PC-9 (cell line): ENCODE measurements at regions of chr13 and their contacts with region 1.

Region 1: DNA sequence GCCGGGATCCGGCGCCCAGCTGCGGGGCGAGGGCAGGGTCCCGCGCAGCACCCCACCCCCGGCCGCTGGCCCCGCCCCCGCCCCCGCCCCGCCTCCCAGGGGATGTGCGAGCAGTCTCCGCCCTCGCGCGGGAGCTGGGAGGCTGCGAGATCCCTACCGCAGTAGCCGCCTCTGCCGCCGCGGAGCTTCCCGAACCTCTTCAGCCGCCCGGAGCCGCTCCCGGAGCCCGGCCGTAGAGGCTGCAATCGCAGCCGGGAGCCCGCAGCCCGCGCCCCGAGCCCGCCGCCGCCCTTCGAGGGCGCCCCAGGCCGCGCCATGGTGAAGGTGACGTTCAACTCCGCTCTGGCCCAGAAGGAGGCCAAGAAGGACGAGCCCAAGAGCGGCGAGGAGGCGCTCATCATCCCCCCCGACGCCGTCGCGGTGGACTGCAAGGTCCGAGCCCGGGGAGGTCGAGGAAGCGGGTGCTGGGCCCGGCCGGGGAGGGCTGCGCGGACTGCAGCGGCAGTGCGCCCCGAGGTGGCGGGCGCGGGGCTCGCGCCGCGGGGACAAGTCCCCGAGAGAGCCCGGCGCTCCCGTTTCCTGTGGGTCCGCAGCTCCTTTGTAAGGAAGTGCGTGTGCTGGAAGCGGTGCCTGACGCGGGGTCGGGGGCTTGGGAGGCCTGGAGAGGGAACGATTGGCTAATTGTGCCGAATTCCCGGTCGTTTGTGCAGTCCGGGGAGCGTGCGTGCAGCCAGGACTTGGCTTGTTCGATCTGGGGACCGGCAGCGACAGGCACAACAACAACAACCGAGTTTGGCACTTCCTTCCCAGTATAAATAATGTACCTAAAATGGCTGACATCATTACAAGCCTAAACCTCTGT is at the start of gene ITM2B:
- DNase-seq: peak; percentile 51 to 71
- H3K4me3 ChIP-seq: peak within 1 kb of the TSS; percentile 67
- H3K27ac ChIP-seq: peak within 1 kb of the TSS; percentile 43; the same call in 1 of the 2 replicates
- H3K4me1 ChIP-seq: peaks cover 28% of the 10 kb centered on the region
- H3K27me3 ChIP-seq: no peaks in the 10 kb centered on the region
- CTCF ChIP-seq: no peak; the same call in 1 of the 2 replicates
- total RNA-seq, gene ITM2B: 136 and 155 TPM in 2 replicates

Region 2: DNA sequence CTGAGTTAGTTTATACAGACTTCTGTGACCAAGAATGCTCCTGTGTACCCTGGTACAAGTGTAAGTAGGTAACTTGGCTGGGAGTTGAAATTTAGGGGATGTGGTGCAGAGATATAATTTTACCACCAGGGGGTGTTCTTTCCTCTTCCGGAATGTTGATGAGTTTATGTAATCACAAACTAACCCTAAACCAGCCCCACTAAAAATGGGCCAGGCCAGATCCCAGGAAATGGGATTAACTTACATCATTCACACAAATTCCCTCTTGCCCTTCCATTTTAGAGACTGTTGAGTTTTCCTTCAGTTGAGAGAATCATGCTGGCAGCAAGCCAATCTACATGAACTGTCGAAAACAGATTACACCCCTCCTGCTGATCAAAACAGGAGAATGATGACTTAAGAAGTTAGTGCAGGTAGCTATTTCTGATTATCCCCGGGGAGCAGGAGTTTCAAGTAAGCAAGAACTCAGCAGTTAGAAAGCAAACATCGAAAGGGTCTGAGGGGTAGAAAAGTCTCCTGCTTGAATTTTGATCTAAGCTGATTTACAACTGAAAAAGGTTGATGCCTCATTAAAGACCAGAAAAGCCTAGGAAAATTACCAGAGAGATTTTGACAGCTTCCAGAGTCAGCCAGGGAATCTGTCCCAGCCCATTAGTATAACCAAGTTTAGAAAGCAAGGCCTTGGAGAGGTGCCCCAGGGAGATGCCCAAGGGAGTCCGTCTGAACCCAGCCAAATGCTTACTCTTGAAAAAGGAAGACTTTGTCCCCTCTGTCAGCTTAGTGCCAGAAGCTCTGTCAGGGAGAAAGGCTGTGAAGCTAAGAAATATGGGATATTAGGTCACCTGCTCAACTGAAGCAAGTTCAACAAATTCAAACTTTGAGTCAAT is 106.1 kb before region 1 on chr13:
- CTCF ChIA-PET with region 1: no interaction called
- POLR2A ChIA-PET with region 1: interaction called, 3 read pairs
- intact Hi-C with region 1: loop called (anchors 1 kb)
- DNase-seq: peak; percentile 21 to 52
- H3K4me3 ChIP-seq: no peak overlapping the region
- H3K27ac ChIP-seq: no peak overlapping the region
- H3K4me1 ChIP-seq: no peaks in the 10 kb centered on the region
- H3K27me3 ChIP-seq: no peaks in the 10 kb centered on the region
- CTCF ChIP-seq: peak; percentile 77

Region 3: DNA sequence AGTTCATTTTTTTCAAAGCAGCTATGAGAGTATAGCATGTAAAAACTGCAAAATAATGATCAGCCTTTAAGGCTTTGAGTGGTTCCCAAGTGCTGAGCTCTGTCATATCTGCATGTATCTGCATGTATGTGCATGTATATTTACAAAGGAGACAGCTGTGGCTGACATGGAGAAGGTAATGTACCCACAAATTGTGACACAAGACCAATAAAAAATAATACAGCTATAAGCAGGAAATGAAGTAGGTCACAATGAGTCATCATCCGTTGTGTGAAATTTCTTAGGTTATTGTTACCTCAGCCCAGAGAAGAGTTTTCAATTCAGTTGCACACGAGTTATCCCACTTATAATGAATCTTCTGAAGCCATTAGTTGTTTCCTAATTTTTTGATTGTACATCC is 77.4 kb before region 1 on chr13:
- CTCF ChIA-PET with region 1: no interaction called
- POLR2A ChIA-PET with region 1: no interaction called
- intact Hi-C with region 1: loop called (anchors 10 kb)
- DNase-seq: peak in 1 of 2 experiments; percentile 71
- H3K4me3 ChIP-seq: no peak overlapping the region
- H3K27ac ChIP-seq: peak overlapping the region; percentile 26
- H3K4me1 ChIP-seq: peaks cover 13% of the 10 kb centered on the region
- H3K27me3 ChIP-seq: no peaks in the 10 kb centered on the region
- CTCF ChIP-seq: no peak

Region 4: DNA sequence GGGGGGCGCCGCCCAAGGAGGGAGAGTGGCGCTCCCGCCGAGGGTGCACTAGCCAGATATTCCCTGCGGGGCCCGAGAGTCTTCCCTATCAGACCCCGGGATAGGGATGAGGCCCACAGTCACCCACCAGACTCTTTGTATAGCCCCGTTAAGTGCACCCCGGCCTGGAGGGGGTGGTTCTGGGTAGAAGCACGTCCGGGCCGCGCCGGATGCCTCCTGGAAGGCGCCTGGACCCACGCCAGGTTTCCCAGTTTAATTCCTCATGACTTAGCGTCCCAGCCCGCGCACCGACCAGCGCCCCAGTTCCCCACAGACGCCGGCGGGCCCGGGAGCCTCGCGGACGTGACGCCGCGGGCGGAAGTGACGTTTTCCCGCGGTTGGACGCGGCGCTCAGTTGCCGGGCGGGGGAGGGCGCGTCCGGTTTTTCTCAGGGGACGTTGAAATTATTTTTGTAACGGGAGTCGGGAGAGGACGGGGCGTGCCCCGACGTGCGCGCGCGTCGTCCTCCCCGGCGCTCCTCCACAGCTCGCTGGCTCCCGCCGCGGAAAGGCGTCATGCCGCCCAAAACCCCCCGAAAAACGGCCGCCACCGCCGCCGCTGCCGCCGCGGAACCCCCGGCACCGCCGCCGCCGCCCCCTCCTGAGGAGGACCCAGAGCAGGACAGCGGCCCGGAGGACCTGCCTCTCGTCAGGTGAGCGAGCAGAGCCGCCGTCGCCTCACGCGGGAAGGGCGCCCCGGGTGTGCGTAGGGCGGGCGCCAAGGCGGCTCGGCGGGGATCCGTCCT is 70.3 kb after region 1 on chr13 and contains the start of gene RB1:
- CTCF ChIA-PET with region 1: no interaction called
- POLR2A ChIA-PET with region 1: no interaction called
- intact Hi-C with region 1: loop called (anchors 5 kb)
- DNase-seq: peak; percentile 72 to 87
- H3K4me3 ChIP-seq: peak within 1 kb of the TSS; percentile 97
- H3K27ac ChIP-seq: peak within 1 kb of the TSS; percentile 93
- H3K4me1 ChIP-seq: peaks cover 18% of the 10 kb centered on the region
- H3K27me3 ChIP-seq: no peaks in the 10 kb centered on the region
- CTCF ChIP-seq: no peak
- total RNA-seq, gene RB1: 19.8 and 23.7 TPM in 2 replicates

Region 5: GRCh38 chr13:48369988-48370387 is 136.7 kb after region 1 on chr13:
- CTCF ChIA-PET with region 1: no interaction called
- POLR2A ChIA-PET with region 1: no interaction called
- intact Hi-C with region 1: loop called (anchors 10 kb)
- DNase-seq: no peak
- H3K4me3 ChIP-seq: no peak overlapping the region
- H3K27ac ChIP-seq: no peak overlapping the region
- H3K4me1 ChIP-seq: no peaks in the 10 kb centered on the region
- H3K27me3 ChIP-seq: no peaks in the 10 kb centered on the region
- CTCF ChIP-seq: no peak